ENCODE measurements at regions of chr20 and their contacts with region 1.

Region 1: GRCh38 chr20:16337707-16338106 is 235.5 kb downstream of the KIF16B start:
- DNase-seq: no peak
- ATAC-seq: no peak
- H3K4me3 ChIP-seq: no peak overlapping the region
- H3K27ac ChIP-seq: no peak overlapping the region
- H3K4me1 ChIP-seq: no peaks in the 10 kb centered on the region
- H3K27me3 ChIP-seq: no peaks in the 10 kb centered on the region
- CTCF ChIP-seq: no peak
- POLR2A ChIP-seq: no peak

Region 2: DNA sequence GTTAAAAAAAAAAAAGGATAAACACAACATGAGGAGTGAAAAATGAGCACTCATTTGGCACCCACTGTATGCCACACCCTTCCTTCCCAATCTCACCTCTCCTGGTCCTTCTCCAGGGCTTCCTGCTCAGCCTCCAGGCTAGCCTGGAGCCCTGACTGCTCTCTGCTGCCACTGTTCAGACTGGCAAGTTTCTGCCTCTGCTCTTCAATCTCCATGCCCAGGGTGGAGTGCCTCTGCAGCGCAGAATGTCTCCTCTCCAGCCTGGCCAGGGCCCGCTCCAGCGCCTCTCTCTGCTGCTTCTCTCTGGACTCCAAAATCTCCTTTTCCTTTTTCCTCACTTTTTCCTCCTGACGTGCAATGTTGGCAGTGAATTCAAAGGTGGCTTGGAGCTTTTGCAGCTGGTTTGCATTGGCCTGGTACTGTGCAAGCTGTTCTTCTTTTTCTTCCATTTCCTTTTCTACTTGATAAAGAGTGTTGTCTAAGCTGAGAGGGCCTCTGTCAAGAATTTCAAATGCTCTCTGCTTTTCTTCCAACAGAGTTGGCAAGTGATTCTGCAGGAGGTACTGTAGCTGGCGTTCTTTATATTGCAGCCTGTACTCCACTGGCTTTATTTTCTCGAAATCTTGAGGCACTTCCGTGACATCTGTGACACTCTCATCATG is 41.1 kb after region 1 on chr20:
- intact Hi-C with region 1: no loop called
- DNase-seq: no peak
- ATAC-seq: no peak
- H3K4me3 ChIP-seq: no peak overlapping the region
- H3K27ac ChIP-seq: no peak overlapping the region
- H3K4me1 ChIP-seq: no peaks in the 10 kb centered on the region
- H3K27me3 ChIP-seq: no peaks in the 10 kb centered on the region
- CTCF ChIP-seq: no peak
- POLR2A ChIP-seq: no peak

Region 3: DNA sequence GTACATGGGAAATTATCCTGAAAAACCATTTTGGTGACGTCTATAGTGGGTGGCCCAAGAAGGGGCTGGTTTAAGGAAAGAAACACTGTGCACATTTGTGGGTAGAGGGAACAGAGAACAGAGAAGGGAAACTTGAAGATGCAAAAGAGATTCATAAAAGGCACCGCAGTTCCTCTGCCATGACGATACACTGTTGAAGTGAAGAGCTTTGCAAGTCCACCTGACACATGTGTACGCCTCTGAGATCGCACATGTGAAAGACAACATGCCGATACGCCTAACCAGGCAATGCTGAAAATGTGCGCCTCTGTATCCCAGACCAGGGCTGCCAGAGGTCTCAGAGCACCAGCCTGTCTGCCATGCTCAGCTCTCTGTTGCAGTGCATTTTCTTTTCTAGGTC is 54.6 kb after region 1 on chr20:
- intact Hi-C with region 1: loop called in 1 of 10 experiments (anchors 10 kb)
- DNase-seq: no peak
- ATAC-seq: no peak
- H3K4me3 ChIP-seq: no peak overlapping the region
- H3K27ac ChIP-seq: no peak overlapping the region
- H3K4me1 ChIP-seq: peaks cover 0 to 10% (median 7%) of the 10 kb centered on the region in 12 donors
- H3K27me3 ChIP-seq: no peaks in the 10 kb centered on the region
- CTCF ChIP-seq: no peak
- POLR2A ChIP-seq: no peak